A673 (cell line): ENCODE measurements at regions of chr12 and their contacts with region 1.

Region 1: GRCh38 chr12:34311337-34311736 is 289.0 kb downstream of the ALG10 start:
- DNase-seq: no peak
- H3K4me3 ChIP-seq: no peak overlapping the region
- H3K27ac ChIP-seq: no peak overlapping the region
- H3K4me1 ChIP-seq: no peaks in the 10 kb centered on the region
- H3K27me3 ChIP-seq: no peaks in the 10 kb centered on the region
- CTCF ChIP-seq: no peak

Region 2: DNA sequence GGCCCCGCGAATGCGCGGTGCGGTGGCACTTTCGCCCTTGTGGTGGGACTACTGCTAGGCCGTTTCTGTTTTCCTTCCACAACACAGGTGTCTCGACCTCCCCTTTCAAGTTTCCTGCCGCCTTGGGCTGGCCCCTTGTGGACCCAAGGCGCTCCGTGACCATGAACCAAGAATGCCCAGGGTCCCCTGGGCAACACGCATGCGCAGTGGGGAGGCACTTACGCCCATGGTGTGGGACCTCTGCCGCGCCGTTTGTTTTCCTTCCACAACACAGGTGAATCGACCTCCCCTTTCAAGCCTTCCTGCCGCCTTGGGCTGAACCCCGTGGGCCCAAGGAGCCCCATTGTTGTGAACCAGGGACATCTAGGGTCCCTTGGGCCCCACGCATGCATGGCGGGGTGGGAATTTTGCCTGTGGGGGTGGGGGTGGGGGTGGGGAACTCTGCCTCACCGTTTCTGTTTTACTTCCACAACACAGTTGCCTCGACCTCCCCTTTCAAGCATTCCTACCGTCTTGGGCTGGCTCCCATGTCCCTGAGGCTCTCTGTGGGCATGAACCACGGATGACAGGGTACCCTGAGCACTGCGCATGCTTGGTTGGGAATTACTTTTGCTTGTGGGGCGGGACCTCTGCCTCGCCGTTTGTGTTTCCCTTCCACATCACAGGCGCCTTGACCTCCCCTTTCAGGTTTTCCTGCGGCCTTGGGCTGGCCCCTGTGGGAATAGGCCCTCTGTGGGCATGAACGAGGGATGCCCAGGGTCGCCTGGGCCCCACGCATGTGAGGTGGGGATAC is 66.1 kb after region 1 on chr12:
- CTCF ChIA-PET with region 1: no interaction called
- POLR2A ChIA-PET with region 1: no interaction called
- intact Hi-C with region 1: loop called (anchors 10 kb)
- DNase-seq: no peak
- H3K4me3 ChIP-seq: no peak overlapping the region
- H3K27ac ChIP-seq: no peak overlapping the region
- H3K4me1 ChIP-seq: no peaks in the 10 kb centered on the region
- H3K27me3 ChIP-seq: no peaks in the 10 kb centered on the region
- CTCF ChIP-seq: no peak